ENCODE measurements at regions of chr19 and their contacts with region 1.

Region 1: GRCh38 chr19:15340086-15340485 is 7.7 kb upstream of the BRD4 start:
- DNase-seq: no peak
- ATAC-seq: no peak
- H3K4me3 Mint-ChIP-seq: no peak overlapping the region
- H3K27ac Mint-ChIP-seq: no peak overlapping the region
- H3K4me1 Mint-ChIP-seq: peaks cover 0 to 2% (median 0%) of the 10 kb centered on the region in 4 donors
- H3K27me3 Mint-ChIP-seq: no peaks in the 10 kb centered on the region

Region 2: DNA sequence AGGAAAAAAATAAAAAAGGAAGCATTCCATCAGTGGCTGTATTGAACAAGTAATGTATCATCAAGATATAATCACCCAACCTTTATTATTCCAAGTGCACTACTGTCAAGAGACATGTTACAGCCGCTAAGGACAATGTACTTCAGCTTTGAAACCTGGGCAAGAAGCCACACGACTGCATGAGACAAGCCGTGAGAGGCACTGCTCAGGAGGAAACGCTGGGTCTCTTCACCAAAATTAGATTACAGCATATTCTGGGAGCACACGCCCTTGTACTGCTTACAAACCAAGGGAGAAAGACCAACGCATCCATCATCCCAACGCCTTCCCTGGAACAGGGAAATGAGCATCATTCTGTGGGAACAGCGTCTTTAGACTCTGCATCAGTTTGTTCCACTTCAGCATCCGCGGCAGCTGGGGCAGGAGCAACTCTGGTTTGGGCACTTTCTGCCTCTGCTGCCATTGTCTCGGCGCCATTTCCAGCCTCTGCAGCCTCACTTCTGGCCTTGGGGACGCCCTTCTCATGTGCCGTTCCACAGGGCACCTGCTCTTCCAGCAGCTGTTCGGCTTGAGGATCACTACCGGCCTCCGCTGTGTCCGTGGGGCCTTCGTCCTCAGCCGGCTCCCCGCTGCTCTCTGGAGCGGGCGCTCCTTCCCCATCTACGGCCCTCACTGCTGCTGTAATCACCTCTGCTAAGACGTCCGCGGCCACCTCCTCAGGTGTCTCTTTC is 14.6 kb after region 1 on chr19:
- POLR2A ChIA-PET with region 1: interaction called, 11 read pairs
- DNase-seq: no peak
- ATAC-seq: no peak
- H3K4me3 Mint-ChIP-seq: no peak overlapping the region
- H3K27ac Mint-ChIP-seq: peak overlapping the region in 1 of 10 donors; percentile 47
- H3K4me1 Mint-ChIP-seq: no peaks in the 10 kb centered on the region
- H3K27me3 Mint-ChIP-seq: no peaks in the 10 kb centered on the region

Measured in naive thymus-derived CD8-positive, alpha-beta T cell (primary cell).